ENCODE measurements at regions of chr7 and their contacts with region 1.

Region 1: DNA sequence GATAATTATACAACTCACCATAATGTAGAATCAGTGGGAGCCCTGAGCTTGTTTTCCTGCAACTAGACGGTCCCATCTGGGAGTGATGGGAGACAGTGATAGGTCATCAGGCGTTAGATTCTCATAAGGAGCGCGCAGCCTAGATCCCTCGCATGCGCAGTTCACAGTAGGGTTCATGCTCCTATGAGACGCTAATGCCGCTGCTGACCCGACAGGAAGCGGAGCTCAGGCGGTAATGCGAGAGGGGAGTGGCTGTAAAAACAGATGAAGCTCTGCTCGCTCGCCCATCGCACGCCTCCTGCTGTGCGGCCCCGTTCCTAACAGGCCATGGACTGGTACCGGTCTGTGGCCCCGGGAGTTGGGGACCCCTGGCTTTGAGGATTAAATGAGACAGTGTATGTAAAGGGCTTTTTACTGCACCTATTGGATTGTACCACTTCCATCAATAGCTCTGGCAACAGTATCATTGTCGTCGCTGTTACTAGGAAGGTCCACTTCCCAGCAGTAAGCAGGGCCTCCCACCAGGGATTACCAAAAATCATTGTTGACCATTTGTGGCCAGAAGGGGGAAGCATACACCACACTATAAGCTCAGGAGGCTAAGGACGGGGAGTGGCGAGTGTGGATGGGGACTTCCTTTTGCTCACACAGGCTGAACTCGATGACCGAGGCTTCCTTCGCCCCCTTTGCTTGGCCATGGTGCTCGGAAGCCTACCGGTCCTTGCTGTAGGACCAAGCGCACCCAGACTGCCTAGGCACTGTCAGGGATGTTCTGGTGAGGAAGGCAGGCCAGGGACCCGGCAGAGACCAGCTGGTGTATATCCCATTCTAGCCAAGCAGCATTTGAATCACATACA is 26.4 kb downstream of the AKR1B1 start:
- DNase-seq: peak; percentile 88
- CTCF ChIP-seq: peak; percentile 76

Region 2: GRCh38 chr7:134613623-134614347 is 181.3 kb after region 1 on chr7:
- in situ Hi-C with region 1: loop called (anchors 10 kb)
- DNase-seq: no peak
- CTCF ChIP-seq: no peak

Region 3: DNA sequence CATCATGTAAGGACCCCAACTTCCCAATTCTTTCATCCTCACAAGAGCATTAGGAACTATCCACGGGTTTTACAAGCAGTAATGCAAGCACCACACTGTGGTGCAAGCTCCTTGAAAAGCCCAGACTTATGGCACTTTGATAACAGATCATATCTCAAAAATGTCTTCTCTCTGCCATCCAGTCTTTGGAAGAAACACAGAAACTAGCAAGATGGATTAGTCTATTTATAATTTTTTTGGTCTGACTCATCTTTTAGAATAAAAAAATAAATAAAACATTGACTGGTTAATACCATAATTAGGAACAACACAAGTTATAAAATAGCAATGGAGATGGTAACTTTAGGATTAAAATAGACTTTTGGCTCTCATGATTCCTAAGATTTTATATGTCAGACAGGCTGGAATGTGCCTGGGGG is 297.9 kb after region 1 on chr7:
- in situ Hi-C with region 1: no loop called
- DNase-seq: no peak
- CTCF ChIP-seq: no peak

Region 4: DNA sequence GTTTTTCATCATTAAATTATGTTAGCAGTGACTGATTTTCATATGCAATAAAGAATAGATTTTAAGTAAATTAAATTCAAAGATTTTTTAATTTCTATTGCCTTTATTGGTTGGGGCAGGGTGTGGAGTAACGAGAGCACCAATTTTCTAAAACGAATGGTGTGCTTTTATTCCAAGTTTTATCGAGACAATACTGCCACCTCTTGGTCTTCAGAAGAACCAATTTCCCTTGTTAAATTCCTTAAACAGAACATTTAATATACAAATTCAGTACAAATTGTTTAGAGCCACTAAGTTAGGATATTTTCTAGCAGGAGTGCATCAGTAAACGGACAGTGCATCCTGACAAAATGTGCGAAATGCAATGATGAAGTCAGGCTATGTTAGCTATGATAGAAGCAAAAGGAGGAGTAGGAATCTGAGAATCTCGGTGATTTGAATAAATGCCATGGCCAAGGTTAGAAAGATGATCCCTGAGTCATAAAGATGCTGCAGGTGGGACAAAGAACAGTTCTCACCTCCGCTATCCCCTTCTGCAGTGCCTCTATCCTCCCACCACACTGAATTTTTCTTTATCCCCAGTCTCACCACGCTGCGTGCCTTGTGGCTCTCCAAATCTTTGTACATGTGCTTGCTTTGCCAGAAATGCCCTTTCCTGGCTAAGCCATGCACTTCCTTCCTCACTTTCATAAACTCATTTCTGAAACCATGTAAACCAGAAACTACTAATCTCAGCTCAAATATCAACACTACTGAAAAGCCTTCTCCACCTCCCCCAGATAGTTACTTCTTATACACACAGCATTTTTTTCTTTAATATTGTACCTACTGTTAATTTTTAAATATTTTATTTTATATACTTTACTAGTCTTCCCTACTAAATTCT is 521.9 kb after region 1 on chr7:
- in situ Hi-C with region 1: loop called (anchors 25 kb)
- DNase-seq: peak; percentile 42
- CTCF ChIP-seq: peak; percentile 69

Measured in GM13977 (cell line).